B cell (primary cell): ENCODE measurements at regions of chr12 and their contacts with region 1.

Region 1: DNA sequence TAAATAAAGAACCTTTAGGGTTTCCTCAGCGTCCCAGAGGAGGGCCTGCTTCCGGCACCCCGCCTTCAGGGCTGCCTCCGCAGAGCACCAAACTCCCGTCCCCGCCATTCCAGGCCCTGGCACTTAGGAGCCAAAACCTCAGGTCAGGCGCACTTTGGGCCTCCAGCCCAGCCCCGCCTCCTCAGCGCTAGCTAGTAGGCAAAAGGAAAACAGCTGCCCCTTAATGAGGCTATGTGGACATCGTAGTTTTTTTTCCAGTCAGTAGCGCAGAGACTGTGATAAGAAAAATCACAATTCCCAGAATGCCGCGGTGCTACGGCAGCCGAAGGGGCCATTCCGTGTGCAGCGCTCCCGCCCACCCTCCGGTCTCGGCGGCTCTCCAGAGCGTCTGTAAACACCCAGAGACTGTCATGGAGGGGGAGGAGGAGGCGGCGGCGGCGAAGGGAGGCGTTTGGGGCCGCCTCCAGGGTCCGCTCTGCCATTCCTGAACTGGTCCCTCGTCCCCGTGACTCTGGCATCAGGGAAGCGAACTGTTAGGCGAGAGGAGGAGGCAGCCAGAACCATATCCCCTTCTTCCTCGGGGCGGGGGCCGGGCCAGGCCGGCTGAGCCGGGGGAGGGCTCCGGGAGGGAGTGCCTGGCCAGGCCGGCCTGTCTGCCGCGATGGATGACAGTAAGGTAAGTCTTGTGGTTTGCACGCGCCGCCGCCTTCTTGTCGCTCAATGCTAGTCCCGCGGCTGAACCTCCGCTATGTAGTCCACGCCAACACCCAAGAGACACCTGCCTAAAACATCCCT is at the start of gene CREBL2:
- DNase-seq: peak; percentile 94
- ATAC-seq: peak; percentile 91
- H3K4me3 ChIP-seq: peak within 1 kb of the TSS; percentile 65 to 100 (median 89)
- H3K4me3 Mint-ChIP-seq: peak within 1 kb of the TSS; percentile 97
- H3K27ac ChIP-seq: peak within 1 kb of the TSS; percentile 92 to 95
- H3K27ac Mint-ChIP-seq: peak within 1 kb of the TSS; percentile 98
- H3K4me1 ChIP-seq: peaks cover 16 to 24% of the 10 kb centered on the region in 2 donors
- H3K4me1 Mint-ChIP-seq: peaks cover 32% of the 10 kb centered on the region
- H3K27me3 ChIP-seq: no peaks in the 10 kb centered on the region
- H3K27me3 Mint-ChIP-seq: no peaks in the 10 kb centered on the region
- CTCF ChIP-seq: no peak
- total RNA-seq, gene CREBL2: 20.2 and 22.1 TPM in 2 replicates

Region 2: DNA sequence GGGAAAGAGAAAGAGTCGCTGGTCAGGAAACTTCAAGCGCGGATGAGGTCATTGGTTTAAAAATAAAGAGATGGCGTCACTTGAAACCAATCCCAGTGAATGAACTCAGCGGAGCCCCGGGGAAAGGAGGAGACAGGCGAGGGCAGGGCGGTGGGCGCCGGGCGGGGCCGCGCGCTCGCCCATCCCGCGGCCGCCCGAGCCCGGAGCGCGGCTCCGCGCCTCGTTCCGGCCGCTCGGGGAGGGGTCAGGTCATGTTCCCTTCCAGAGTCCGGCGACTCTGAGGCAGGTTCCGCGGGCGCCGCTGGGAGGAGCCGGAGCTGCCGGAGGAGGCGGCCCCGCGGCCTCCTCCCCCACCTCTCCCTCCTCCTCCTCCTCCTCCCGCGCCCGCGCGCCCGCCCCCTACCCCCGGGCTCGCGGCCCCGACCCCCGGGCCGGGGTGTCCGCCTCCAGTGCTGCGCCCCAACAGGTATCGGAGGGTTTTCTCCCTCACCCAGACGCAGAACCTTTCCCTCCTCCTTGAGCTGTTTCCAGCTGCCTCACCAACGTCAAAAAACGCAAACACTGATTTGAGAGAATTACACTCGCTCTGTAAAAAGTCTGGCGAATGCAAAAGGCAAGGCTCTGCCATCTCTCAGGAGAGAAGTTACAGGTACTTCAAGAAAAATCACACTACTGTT is 49.0 kb before region 1 on chr12 and contains the start of gene DUSP16:
- CTCF ChIA-PET with region 1: interaction called, 4 read pairs
- POLR2A ChIA-PET with region 1: no interaction called
- intact Hi-C with region 1: loop called (anchors 1 kb)
- DNase-seq: peak; percentile 90
- ATAC-seq: peak; percentile 70
- H3K4me3 ChIP-seq: peak within 1 kb of the TSS; percentile 55 to 78 (median 72)
- H3K4me3 Mint-ChIP-seq: peak within 1 kb of the TSS; percentile 95
- H3K27ac ChIP-seq: peak within 1 kb of the TSS; percentile 38 to 82
- H3K27ac Mint-ChIP-seq: peak within 1 kb of the TSS; percentile 92
- H3K4me1 ChIP-seq: peaks cover 17 to 18% of the 10 kb centered on the region in 2 donors
- H3K4me1 Mint-ChIP-seq: peaks cover 20% of the 10 kb centered on the region
- H3K27me3 ChIP-seq: peaks cover 0 to 9% (median 3%) of the 10 kb centered on the region in 4 experiments
- H3K27me3 Mint-ChIP-seq: peaks cover 8% of the 10 kb centered on the region
- CTCF ChIP-seq: no peak
- total RNA-seq, gene DUSP16: 5.6 and 5.9 TPM in 2 replicates

Region 3: DNA sequence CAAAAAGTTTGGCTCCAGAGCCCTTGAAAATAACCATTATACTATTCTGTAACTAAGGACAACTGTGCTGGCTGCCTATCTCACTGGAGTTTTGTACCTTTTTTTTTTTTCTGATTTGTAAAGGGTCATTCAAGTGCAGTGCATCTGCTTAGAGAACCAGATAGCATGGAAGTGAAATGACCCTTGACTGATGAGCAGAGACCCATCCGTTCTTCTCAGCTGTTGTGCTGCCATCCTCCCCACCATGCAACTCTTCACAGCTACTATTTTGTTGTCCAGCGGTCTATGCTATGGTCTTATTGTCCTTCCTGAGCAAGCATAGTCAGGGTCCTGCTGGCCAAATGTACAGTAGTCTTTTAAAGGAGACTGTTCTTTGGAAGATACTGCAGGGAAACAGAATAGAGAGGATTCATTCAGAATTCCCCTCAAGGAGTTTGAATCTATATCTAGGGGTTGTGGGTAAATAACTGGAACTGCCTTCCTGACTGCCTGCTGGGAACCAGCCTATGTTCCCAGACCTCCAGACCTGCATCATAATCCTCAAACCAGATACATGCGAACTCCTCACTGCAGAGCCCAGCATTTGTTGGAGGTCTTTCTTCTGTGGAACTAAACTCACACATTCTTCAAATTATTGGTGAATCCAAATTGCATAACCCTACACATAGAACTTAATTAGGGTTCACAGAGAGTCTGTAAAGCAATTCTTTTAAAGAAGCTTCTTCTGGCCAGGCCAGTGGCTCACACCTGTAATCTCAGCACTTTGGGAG is 43.2 kb after region 1 on chr12:
- CTCF ChIA-PET with region 1: no interaction called
- POLR2A ChIA-PET with region 1: no interaction called
- intact Hi-C with region 1: loop called (anchors 5 kb)
- DNase-seq: no peak
- ATAC-seq: no peak
- H3K4me3 ChIP-seq: no peak overlapping the region
- H3K4me3 Mint-ChIP-seq: no peak overlapping the region
- H3K27ac ChIP-seq: no peak overlapping the region
- H3K27ac Mint-ChIP-seq: no peak overlapping the region
- H3K4me1 ChIP-seq: peaks cover 3 to 9% of the 10 kb centered on the region in 2 donors
- H3K4me1 Mint-ChIP-seq: peaks cover 6% of the 10 kb centered on the region
- H3K27me3 ChIP-seq: no peaks in the 10 kb centered on the region
- H3K27me3 Mint-ChIP-seq: no peaks in the 10 kb centered on the region
- CTCF ChIP-seq: no peak

Region 4: DNA sequence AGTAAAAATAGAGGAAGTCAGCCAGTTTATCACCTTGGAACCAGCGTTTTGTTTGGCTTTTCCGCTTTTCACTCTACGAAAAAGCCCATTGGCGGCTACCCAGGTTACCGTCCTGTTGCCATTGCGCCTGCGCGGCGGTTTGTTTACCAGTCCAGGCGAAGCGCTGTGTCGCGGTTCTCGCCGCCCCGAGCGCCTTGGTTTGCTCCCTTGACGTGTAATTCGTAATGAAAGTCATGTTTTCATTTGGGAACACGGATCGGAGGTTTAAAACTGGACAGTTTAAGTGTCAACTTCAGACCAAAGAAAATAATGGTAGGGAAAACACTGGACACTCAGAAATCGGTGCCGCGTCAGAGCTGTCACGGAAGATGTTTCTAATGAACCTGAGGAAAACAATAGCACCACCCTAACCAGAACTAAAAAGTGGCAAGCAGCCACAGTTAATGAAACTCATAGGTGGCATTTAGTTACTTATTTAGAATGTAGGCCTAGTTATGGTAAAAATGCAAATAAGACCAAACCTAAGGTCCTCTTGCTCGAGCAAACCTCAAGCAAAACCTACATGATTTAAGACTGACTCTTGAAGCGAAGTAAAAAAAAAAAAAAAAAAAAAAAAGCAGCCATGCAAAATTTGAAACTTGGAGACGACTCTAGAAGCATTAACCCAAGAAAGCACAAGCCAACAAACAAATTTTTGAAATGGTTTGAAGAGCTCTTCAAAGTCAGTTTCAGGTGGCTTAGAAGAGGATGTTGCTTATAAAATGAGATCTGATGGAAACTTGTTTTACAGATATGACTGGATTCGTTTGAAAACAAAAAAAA is 85.1 kb after region 1 on chr12:
- CTCF ChIA-PET with region 1: interaction called, 4 read pairs
- POLR2A ChIA-PET with region 1: interaction called, 15 read pairs
- intact Hi-C with region 1: loop called (anchors 1 kb)
- DNase-seq: peak; percentile 95
- ATAC-seq: peak; percentile 86
- H3K4me3 ChIP-seq: peak overlapping the region; percentile 66 to 77 (median 68)
- H3K4me3 Mint-ChIP-seq: peak overlapping the region; percentile 99
- H3K27ac ChIP-seq: peak overlapping the region; percentile 97 to 98
- H3K27ac Mint-ChIP-seq: peak overlapping the region; percentile 100
- H3K4me1 ChIP-seq: peaks cover 15 to 23% of the 10 kb centered on the region in 2 donors
- H3K4me1 Mint-ChIP-seq: peaks cover 32% of the 10 kb centered on the region
- H3K27me3 ChIP-seq: no peaks in the 10 kb centered on the region
- H3K27me3 Mint-ChIP-seq: no peaks in the 10 kb centered on the region
- CTCF ChIP-seq: no peak

Region 5: DNA sequence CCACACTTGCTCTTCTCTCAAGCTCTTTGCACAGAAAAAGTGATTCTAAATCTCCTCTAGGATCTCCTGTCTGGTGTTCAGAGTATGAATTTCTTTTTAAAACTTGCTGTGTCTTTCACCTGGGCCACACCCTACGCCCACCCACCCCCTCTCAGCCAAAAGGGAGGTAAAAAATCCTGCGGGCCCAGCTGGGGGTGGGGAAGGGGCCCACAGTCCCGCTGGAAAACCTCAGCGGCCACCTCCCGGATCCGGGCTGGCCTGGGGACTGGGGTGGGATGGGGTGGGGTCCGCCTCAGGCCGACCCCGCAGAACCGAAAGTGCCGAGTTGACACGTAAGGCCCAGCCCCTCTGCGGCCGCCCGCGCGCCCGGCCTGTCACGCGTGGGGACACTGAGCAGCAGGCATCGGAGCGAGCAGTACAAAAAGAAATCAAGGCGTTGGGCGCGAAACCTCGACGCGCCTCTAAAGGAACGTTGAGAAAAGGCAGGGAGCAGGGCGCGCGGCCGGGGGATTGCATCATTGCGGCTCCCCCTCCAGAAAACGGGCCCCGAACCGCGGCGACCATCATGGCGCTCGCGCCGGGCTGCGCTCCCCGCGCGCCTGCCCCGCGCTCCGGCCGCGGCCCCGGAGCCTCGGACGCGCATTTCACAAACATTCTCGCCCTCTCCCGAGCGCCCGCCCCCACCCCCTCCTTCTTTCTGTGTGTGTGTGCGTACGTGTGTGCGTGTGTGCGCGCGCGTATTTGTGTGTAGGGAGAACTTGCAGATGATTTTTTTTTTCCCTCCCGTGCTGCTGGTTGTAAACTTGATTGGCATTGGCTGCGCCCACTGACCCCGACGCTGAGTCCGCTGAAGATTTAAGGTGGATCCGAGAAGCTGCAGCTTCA is 113.2 kb after region 1 on chr12:
- CTCF ChIA-PET with region 1: no interaction called
- POLR2A ChIA-PET with region 1: interaction called, 3 read pairs
- intact Hi-C with region 1: loop called (anchors 1 kb)
- DNase-seq: no peak
- ATAC-seq: peak; percentile 65
- H3K4me3 ChIP-seq: peak overlapping the region; percentile 74 to 88 (median 78)
- H3K4me3 Mint-ChIP-seq: peak overlapping the region; percentile 87
- H3K27ac ChIP-seq: peak overlapping the region; percentile 94 to 97
- H3K27ac Mint-ChIP-seq: peak overlapping the region; percentile 94
- H3K4me1 ChIP-seq: peaks cover 22 to 30% of the 10 kb centered on the region in 2 donors
- H3K4me1 Mint-ChIP-seq: peaks cover 52% of the 10 kb centered on the region
- H3K27me3 ChIP-seq: no peaks in the 10 kb centered on the region
- H3K27me3 Mint-ChIP-seq: no peaks in the 10 kb centered on the region
- CTCF ChIP-seq: peak; percentile 10

Region 6: DNA sequence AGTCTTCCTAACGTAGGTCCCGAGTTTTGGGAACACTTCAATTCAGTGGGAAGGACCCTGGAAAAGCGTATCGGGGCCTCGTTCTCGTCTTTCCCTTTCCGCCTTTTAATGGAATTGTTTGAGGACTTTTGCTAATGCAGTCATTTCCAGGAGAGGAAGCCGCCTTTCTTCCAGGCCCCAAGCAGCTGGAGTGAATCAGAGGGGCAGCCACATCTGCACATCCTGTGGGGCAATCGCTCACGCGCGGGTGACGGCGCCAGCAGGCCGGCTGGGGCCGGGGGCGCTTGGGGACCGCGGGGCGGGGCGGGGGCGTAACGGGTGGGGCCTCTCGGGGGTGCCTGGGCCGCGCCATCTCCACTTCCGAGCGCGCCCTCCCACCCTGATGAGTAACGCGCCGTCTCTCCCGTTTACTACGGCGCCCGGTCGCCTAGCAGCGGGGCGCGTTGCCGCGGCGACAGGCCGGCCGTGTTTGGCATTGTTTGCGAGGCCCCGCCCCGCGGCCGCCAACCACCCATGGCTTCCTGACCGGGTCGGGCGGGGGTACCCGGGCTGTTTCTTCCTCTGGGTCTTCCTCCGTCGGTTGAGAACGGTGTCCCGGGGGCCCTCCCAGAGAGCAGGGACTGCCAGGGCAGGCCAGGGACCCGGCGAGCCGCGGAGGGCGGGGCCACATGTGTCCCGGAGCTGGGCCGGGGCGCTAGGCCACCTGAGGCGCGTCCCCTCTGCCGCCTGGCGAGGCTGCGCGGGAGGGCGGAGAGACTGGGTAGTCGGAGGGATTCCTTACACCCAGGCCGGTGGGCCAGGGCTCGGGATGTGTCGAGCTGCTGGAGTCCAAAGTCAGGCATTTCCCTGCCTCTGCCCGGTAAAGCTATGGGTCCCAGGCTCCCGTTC is 489.4 kb after region 1 on chr12:
- CTCF ChIA-PET with region 1: no interaction called
- POLR2A ChIA-PET with region 1: no interaction called
- intact Hi-C with region 1: loop called (anchors 2 kb)
- DNase-seq: peak; percentile 97
- ATAC-seq: peak; percentile 77
- H3K4me3 ChIP-seq: peak overlapping the region; percentile 39 to 82 (median 71)
- H3K4me3 Mint-ChIP-seq: peak overlapping the region; percentile 88
- H3K27ac ChIP-seq: peak overlapping the region; percentile 97 to 99
- H3K27ac Mint-ChIP-seq: peak overlapping the region; percentile 96
- H3K4me1 ChIP-seq: peaks cover 52 to 63% of the 10 kb centered on the region in 2 donors
- H3K4me1 Mint-ChIP-seq: peaks cover 62% of the 10 kb centered on the region
- H3K27me3 ChIP-seq: no peaks in the 10 kb centered on the region
- H3K27me3 Mint-ChIP-seq: no peaks in the 10 kb centered on the region
- CTCF ChIP-seq: no peak